Mammary epithelial cell (primary cell): ENCODE measurements at regions of chr1 and their contacts with region 1.

Region 1: DNA sequence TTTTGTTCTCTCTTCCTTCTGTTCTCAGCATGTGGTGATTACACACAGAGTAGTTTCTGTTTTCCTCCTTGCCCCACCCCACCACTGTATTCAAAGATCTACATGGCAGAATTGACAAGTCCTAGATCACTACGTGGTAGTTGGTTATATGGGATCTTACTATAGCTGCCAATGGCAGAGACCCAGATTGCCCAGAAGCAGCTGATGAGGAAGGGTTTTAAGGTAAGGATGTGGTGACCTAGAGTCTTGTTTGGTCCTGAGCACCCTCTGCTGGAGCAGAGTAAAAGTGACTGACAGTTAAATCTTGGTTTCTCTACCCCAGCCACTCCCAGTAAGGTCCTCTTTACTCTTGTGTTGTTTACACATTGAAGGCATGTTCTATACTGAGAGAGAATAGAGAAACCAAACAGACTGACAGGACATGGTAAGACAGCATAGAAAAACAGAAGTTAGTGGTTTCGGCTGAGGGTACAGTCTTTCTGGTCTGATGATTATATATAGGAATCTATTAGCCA is 22.8 kb upstream of the STRIP1 start:
- DNase-seq: peak; percentile 54
- H3K4me3 ChIP-seq: no peak overlapping the region
- H3K27ac ChIP-seq: no peak overlapping the region
- H3K4me1 ChIP-seq: no peaks in the 10 kb centered on the region
- H3K27me3 ChIP-seq: no peaks in the 10 kb centered on the region
- CTCF ChIP-seq: peak; percentile 58 to 71

Region 2: DNA sequence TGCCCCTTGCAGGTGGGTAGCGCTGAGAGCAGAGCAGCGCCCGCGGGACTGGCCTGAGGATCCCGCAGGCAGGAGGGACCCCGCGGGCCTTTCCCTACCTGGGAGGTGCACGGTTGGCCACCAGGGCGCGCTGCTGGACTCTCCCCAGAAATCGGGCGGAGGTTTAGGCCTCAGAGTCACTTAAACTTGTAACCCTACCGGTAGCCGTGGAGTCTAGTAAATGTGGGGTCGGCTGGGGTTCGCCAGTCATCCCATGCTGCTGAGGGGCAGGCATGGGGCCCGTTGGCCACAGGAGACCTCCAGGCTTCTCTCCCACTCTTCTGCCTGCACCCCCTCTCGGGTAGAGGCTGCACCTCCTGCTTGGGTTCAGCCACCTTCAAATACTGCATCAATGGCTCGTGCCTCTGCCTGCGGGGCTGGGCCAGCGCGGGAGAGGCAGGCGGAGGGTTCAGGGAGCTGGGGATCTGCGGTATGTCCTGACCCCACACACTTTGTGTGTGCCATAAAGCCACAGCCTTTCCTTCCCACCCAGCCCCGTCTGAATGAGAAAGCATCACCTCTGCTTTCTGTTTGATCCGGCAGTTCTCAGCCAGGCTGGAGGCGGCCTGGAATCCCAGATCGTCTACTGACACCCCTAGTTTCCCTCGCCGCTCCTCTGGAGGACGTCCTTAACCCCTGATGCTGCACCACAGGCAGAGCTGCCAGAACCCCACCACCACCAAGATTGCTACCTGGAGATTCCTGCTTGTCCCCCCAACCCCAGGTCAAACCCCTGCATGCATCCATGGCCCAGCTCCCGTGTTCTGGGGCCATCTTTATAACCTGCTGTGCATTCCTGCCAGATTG is 368.0 kb before region 1 on chr1:
- CTCF ChIA-PET with region 1: no interaction called
- dilution Hi-C with region 1: no loop called
- in situ Hi-C with region 1: no loop called
- intact Hi-C with region 1: loop called (anchors 2 kb)
- DNase-seq: peak; percentile 51
- H3K4me3 ChIP-seq: no peak overlapping the region
- H3K27ac ChIP-seq: no peak overlapping the region
- H3K4me1 ChIP-seq: no peaks in the 10 kb centered on the region
- H3K27me3 ChIP-seq: no peaks in the 10 kb centered on the region
- CTCF ChIP-seq: peak; percentile 77 to 94